Pancreas (tissue), 10 donors: ENCODE measurements at regions of chr5 and their contacts with region 1.

Region 1: DNA sequence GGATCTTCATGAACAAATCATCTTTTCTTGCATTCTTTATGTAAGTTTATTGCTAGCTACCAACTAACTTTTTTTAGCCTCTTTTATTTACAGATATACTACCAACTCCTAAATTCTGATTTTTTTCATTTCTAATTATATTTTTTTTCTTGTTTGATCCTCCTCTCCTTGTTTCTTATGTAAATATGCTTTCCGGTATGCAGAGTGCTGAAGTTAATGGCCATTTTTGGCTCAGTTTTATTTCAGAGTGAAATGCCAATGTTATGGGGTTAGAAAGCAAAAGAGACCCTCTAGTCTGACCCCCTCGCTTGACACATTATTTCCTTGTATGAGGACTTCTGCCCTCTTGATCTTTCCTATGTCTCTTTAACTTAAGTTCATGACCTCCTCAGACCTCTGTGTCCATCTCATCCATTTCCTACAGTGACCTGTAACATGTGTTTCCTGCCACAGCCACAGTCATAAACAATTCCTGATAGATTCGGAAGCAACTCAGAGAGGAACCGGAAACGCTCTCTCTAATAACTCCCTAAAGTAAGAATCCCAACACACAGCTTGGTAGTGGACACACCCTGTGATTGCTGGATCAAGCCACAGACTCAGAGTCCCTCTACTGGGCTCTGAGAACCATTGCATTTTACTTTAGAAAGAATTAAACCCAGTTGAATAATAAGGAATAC is 42.9 kb upstream of the AFAP1L1 start:
- DNase-seq: peak in 1 of 6 donors; percentile 22
- ATAC-seq: peak in 3 of 4 donors; percentile 89 to 95 (median 91)
- H3K4me3 ChIP-seq: no peak overlapping the region
- H3K27ac ChIP-seq: no peak overlapping the region
- H3K4me1 ChIP-seq: no peaks in the 10 kb centered on the region
- H3K27me3 ChIP-seq: no peaks in the 10 kb centered on the region
- CTCF ChIP-seq: peak in 3 of 4 donors; percentile 36 to 42 (median 39)

Region 2: DNA sequence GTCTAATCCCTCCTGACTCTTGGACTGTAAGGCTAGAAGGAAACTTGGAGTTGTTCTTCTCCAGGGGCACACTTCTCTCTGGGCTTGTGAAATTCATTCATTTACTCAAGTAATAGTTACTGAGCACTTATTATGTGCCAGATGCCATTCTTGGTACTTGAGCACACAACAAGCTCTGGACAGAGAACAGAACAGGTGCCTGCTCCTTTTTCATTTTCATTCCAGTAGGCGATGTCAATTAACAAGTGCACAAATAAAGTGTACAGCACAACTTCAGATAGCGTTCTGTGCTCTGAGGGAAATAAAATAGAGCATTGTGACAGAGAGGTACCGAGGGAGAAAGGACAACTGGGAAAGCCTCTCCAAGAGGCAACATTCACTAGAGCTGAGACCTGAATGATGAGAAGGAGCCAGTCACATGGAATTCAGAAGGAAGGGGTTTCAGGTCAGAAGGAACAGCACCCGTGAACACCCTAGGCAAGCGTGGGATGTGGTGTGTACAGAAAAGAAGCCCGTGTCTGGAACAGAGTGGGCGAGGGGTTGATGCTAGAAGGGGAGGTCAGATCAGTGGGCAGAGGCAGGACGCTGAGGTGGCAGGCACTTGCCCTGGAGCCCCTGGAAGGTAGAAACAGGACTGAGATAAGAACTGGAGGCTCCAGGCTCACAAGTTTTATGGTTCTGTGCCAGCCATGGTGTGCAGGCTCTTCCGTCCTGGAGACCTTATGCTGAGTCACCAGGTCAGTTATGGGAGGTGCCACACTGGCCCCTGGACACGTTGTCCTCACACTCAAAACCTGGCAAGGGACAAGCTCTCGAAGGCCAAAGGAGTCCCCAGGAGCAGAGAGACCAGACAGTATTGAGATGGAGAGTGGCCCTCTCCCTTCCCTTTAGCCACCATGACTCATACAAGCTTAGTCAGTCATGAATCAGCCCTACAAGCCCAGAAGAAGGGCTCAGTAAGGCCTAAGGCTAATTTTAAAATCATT is 94.7 kb before region 1 on chr5:
- intact Hi-C with region 1: loop called in 1 of 3 experiments (anchors 10 kb)
- DNase-seq: peak in 2 of 6 donors; percentile 36 to 57
- ATAC-seq: peak; percentile 40 to 81 (median 72)
- H3K4me3 ChIP-seq: no peak overlapping the region
- H3K27ac ChIP-seq: no peak overlapping the region
- H3K4me1 ChIP-seq: peaks cover 4 to 7% (median 4%) of the 10 kb centered on the region in 3 donors
- H3K27me3 ChIP-seq: peaks cover 0 to under 1% (median 0%) of the 10 kb centered on the region in 4 donors
- CTCF ChIP-seq: no peak